ENCODE measurements at regions of chr3 and their contacts with region 1.

Region 1: DNA sequence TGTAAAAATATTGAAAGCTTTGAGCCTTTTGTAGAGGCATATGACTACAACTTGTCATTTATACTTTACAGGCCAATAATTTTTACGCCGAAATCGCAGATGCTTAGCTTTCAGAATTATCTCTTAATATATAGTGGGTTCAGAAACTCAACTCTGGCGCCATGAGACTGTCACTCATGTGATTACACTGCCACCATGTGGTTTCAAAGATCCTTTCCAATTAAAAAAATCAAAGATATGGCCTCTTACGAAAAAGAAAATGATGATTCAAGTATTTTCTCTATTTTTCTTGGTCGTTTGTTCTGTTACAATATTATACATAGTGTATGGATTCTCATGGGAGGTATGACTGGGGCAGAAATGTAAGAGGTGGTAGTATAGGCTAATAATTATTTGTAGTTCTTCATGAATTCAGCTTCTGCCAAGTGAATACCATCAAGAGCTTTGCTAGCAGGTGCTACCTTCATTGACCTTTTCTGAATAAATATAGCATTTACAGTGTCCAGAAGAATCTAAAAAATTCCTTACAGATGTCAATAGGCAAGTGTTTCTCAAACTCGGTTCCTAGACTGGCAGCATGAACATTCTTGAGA is 751.7 kb upstream of the GOLIM4 start:
- DNase-seq: no peak
- ATAC-seq: peak; percentile 62 to 76 (median 70)
- H3K4me3 ChIP-seq: no peak overlapping the region
- H3K27ac ChIP-seq: no peak overlapping the region
- H3K4me1 ChIP-seq: no peaks in the 10 kb centered on the region
- H3K27me3 ChIP-seq: no peaks in the 10 kb centered on the region
- CTCF ChIP-seq: peak; percentile 51 to 67 (median 57)
- POLR2A ChIP-seq: no peak

Region 2: GRCh38 chr3:168213920-168214319 is 633.5 kb before region 1 on chr3:
- intact Hi-C with region 1: loop called in 1 of 2 experiments (anchors 10 kb)
- DNase-seq: no peak
- ATAC-seq: peak in 3 of 4 donors; percentile 40 to 62 (median 43)
- H3K4me3 ChIP-seq: no peak overlapping the region
- H3K27ac ChIP-seq: no peak overlapping the region
- H3K4me1 ChIP-seq: no peaks in the 10 kb centered on the region
- H3K27me3 ChIP-seq: no peaks in the 10 kb centered on the region
- CTCF ChIP-seq: no peak
- POLR2A ChIP-seq: no peak

Region 3: GRCh38 chr3:169634618-169635239 is 787.3 kb after region 1 on chr3:
- intact Hi-C with region 1: no loop called
- DNase-seq: no peak
- ATAC-seq: no peak
- H3K4me3 ChIP-seq: no peak overlapping the region
- H3K27ac ChIP-seq: no peak overlapping the region
- H3K4me1 ChIP-seq: no peaks in the 10 kb centered on the region
- H3K27me3 ChIP-seq: no peaks in the 10 kb centered on the region
- CTCF ChIP-seq: no peak
- POLR2A ChIP-seq: no peak

Measured in right lobe of liver (tissue), 6 donors.